CD14-positive monocyte (primary cell): ENCODE measurements at regions of chr12 and their contacts with region 1.

Region 1: DNA sequence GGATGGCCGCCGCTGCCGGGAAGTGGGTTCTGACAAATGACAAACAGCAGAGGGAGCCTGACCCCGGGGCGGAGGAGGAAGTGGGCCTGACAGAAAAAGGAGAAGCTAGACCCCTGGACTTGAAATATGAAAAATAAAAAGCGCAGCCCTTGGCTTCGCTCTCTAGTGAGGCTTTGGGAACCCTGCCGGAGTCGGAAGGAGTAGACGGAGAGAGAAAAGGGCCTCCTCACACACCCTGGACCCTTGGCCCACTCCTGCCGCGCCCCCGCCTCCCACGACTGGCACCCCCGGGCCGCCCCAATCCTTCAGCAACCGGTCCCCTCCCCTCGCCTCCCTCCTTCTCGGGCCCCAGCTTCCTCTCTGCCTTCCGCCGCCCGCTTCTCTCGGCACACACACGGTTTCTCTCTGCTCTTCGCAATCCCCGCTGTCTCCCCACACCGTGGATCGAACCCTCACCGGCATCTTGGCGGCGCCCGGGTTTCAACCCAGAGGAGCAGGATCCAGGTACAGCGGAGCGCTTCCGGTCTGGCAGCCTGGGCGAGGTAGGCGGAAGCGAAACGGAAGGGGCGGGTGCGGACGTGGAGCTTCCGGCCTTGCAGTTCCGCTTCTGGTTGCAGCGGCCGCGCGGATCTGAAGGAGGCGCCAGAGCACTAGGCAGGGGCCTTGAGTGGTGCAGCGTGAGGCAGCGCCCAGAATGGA is at the start of gene ARPC3:
- DNase-seq: peak; percentile 95 to 97 (median 97)
- H3K4me3 ChIP-seq: peak within 1 kb of the TSS; percentile 67 to 89 (median 89)
- H3K4me3 Mint-ChIP-seq: peak within 1 kb of the TSS; percentile 99
- H3K27ac ChIP-seq: peak within 1 kb of the TSS; percentile 96 to 100
- H3K27ac Mint-ChIP-seq: peak within 1 kb of the TSS; percentile 99 to 100 (median 100)
- H3K4me1 ChIP-seq: peaks cover 48 to 52% of the 10 kb centered on the region in 2 donors
- H3K4me1 Mint-ChIP-seq: peaks cover 45% of the 10 kb centered on the region
- H3K27me3 ChIP-seq: no peaks in the 10 kb centered on the region
- H3K27me3 Mint-ChIP-seq: no peaks in the 10 kb centered on the region
- CTCF ChIP-seq: peak; percentile 89
- polyA plus RNA-seq, gene ARPC3: 133 to 1,727 (median 1,716) TPM

Region 2: DNA sequence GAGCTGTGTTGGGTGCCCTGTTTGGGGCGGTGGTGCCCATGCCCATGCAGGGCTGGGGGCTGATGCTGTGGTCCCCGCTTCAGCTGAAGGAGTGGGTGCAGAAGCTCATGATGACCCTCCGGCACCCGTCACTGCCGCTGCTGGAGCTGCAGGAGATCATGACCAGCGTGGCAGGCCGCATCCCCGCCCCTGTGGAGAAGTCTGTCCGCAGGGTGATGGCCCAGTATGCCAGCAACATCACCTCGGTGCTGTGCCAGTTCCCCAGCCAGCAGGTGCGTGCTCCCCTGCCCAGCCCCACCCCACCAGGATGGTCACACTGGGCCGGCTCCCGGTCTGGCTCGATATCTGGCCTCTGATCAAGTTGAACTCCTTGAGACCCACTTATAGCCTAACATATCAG is 1240.9 kb before region 1 on chr12:
- intact Hi-C with region 1: no loop called
- DNase-seq: no peak
- H3K4me3 ChIP-seq: no peak overlapping the region
- H3K4me3 Mint-ChIP-seq: no peak overlapping the region
- H3K27ac ChIP-seq: no peak overlapping the region
- H3K27ac Mint-ChIP-seq: no peak overlapping the region
- H3K4me1 ChIP-seq: no peaks in the 10 kb centered on the region
- H3K4me1 Mint-ChIP-seq: peaks cover 2% of the 10 kb centered on the region
- H3K27me3 ChIP-seq: no peaks in the 10 kb centered on the region
- H3K27me3 Mint-ChIP-seq: no peaks in the 10 kb centered on the region
- CTCF ChIP-seq: no peak

Region 3: DNA sequence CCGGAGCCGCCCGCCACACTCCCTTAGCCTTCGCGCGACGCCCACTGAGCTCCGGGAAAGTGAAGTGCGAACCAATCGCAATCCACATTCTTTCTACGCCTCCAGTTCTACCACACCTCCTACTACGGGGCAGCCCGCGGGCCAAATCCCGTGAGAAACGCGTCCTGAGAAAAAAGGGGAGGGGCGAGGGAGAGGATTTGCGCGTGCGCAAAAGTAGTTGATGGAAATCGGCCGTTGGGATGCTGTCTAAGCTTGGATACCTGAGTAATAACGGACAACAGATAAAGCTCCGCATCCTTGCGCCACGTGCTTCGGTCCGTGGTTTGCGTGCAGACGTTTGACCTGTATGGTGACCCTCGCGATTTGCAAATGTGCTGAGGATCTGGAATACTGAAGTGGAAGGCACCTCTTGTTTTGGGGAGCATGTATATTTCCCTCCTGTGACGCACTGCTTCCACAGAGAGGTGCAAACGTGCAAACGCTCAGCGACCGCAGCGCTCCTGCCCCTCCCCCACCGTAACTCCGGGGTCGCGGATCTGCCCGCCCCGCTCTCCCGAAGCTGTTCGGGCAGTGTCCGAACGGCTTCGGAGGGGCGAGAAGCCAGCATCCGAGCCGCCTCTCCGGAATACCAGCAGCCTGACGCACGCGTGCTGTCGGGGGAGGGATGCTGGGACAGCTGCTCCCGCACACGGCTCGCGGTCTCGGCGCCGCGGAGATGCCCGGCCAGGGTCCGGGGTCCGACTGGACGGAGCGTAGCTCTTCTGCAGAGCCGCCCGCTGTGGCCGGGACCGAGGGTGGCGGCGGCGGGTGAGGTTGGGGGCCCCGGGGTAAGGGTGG is 18.5 kb after region 1 on chr12 and contains the starts of genes FAM216A and GPN3:
- intact Hi-C with region 1: loop called (anchors 2 kb)
- DNase-seq: peak; percentile 94 to 96 (median 94)
- H3K4me3 ChIP-seq: peak within 1 kb of the TSS; percentile 62 to 96 (median 76)
- H3K4me3 Mint-ChIP-seq: peak within 1 kb of the TSS; percentile 100
- H3K27ac ChIP-seq: peak within 1 kb of the TSS; percentile 60 to 79
- H3K27ac Mint-ChIP-seq: peak within 1 kb of the TSS; percentile 90 to 98 (median 95)
- H3K4me1 ChIP-seq: peaks cover 23 to 34% of the 10 kb centered on the region in 2 donors
- H3K4me1 Mint-ChIP-seq: peaks cover 25% of the 10 kb centered on the region
- H3K27me3 ChIP-seq: no peaks in the 10 kb centered on the region
- H3K27me3 Mint-ChIP-seq: no peaks in the 10 kb centered on the region
- CTCF ChIP-seq: no peak
- polyA plus RNA-seq, gene FAM216A: 5.1 to 10.9 (median 6.2) TPM
- polyA plus RNA-seq, gene GPN3: 7.3 to 52.4 (median 25.3) TPM

Region 4: GRCh38 chr12:110549716-110550115 is 99.8 kb after region 1 on chr12:
- intact Hi-C with region 1: loop called in 1 of 2 experiments (anchors 5 kb)
- DNase-seq: no peak
- H3K4me3 ChIP-seq: no peak overlapping the region
- H3K4me3 Mint-ChIP-seq: no peak overlapping the region
- H3K27ac ChIP-seq: no peak overlapping the region
- H3K27ac Mint-ChIP-seq: peak overlapping the region in 1 of 7 donors; percentile 33
- H3K4me1 ChIP-seq: peaks cover 0 to 18% of the 10 kb centered on the region in 2 donors
- H3K4me1 Mint-ChIP-seq: peaks cover 29% of the 10 kb centered on the region
- H3K27me3 ChIP-seq: no peaks in the 10 kb centered on the region
- H3K27me3 Mint-ChIP-seq: peaks cover 0 to 2% (median 0%) of the 10 kb centered on the region in 3 donors
- CTCF ChIP-seq: no peak

Region 5: DNA sequence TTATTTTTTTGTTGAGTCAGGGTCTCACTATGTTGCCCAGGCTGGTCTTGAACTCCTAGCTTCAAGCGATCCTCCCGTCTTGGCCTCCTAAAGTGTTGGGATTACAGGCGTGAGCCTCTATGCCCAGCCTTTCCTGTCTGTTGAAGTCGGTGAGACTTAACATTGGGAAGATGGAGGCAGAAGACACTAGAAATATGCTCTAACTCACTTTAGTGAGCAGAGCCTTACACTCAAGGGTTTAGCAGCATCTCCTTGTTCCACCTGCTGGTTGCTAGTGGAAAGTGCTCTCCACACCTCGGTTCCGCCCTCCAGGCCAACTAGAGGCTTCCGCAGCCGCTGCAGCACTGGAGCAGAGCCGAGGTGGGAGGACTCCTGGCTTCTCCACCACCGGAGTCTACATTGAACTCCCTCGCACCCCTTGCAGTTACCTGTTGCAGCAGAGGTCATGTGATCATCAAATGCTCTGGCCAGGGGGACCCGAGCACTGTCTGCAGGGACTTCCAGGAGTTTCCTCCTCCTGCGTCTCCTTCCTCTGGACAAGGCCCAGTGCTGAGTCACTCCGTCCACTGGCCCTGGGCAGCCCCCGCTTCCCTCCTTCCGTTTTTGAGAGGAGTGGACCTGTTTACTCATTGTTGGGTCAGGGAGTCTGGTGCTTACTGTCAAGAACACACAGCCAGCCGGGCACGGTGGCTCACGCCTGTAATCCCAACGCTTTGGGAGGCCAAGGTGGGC is 248.4 kb after region 1 on chr12:
- intact Hi-C with region 1: loop called in 1 of 2 experiments (anchors 2 kb)
- DNase-seq: peak; percentile 85 to 96 (median 91)
- H3K4me3 ChIP-seq: peak overlapping the region; percentile 10 to 72 (median 23)
- H3K4me3 Mint-ChIP-seq: peak overlapping the region; percentile 76 to 87
- H3K27ac ChIP-seq: peak overlapping the region; percentile 62 to 90
- H3K27ac Mint-ChIP-seq: peak overlapping the region; percentile 88 to 95 (median 93)
- H3K4me1 ChIP-seq: peaks cover 62 to 63% of the 10 kb centered on the region in 2 donors
- H3K4me1 Mint-ChIP-seq: peaks cover 63% of the 10 kb centered on the region
- H3K27me3 ChIP-seq: no peaks in the 10 kb centered on the region
- H3K27me3 Mint-ChIP-seq: peaks cover 0 to 3% (median 2%) of the 10 kb centered on the region in 3 donors
- CTCF ChIP-seq: peak; percentile 87

Region 6: GRCh38 chr12:110888256-110888991 is 438.5 kb after region 1 on chr12:
- intact Hi-C with region 1: loop called in 1 of 2 experiments (anchors 2 kb)
- DNase-seq: no peak
- H3K4me3 ChIP-seq: peak overlapping the region in 2 of 3 experiments; percentile 63 to 75
- H3K4me3 Mint-ChIP-seq: no peak overlapping the region
- H3K27ac ChIP-seq: peak overlapping the region in 1 of 2 donors; percentile 71
- H3K27ac Mint-ChIP-seq: peak overlapping the region in 3 of 7 donors; percentile 26 to 83 (median 51)
- H3K4me1 ChIP-seq: no peaks in the 10 kb centered on the region
- H3K4me1 Mint-ChIP-seq: peaks cover 2% of the 10 kb centered on the region
- H3K27me3 ChIP-seq: no peaks in the 10 kb centered on the region
- H3K27me3 Mint-ChIP-seq: peaks cover 2 to 6% (median 3%) of the 10 kb centered on the region in 3 donors
- CTCF ChIP-seq: peak; percentile 69